ENCODE measurements at regions of chr9 and their contacts with region 1.

Region 1: GRCh38 chr9:120792898-120793765 is at the start of gene FBXW2:
- DNase-seq: peak; percentile 58 to 92 (median 78)
- ATAC-seq: peak; percentile 79
- H3K4me3 ChIP-seq: peak within 1 kb of the TSS; percentile 97
- H3K4me3 Mint-ChIP-seq: peak within 1 kb of the TSS; percentile 88
- H3K27ac ChIP-seq: peak within 1 kb of the TSS; percentile 81 to 82
- H3K27ac Mint-ChIP-seq: peak within 1 kb of the TSS; percentile 92
- H3K4me1 ChIP-seq: peaks cover 39% of the 10 kb centered on the region
- H3K4me1 Mint-ChIP-seq: peaks cover 63% of the 10 kb centered on the region
- H3K27me3 ChIP-seq: no peaks in the 10 kb centered on the region
- H3K27me3 Mint-ChIP-seq: no peaks in the 10 kb centered on the region
- CTCF ChIP-seq: no peak
- total RNA-seq, gene FBXW2: 58.7 to 64.7 TPM

Region 2: GRCh38 chr9:120774722-120775121 is 18.4 kb before region 1 on chr9:
- CTCF ChIA-PET with region 1: no interaction called
- POLR2A ChIA-PET with region 1: no interaction called
- intact Hi-C with region 1: no loop called
- DNase-seq: no peak
- ATAC-seq: no peak
- H3K4me3 ChIP-seq: no peak overlapping the region
- H3K4me3 Mint-ChIP-seq: no peak overlapping the region
- H3K27ac ChIP-seq: no peak overlapping the region
- H3K27ac Mint-ChIP-seq: no peak overlapping the region
- H3K4me1 ChIP-seq: no peaks in the 10 kb centered on the region
- H3K4me1 Mint-ChIP-seq: peaks cover 15% of the 10 kb centered on the region
- H3K27me3 ChIP-seq: no peaks in the 10 kb centered on the region
- H3K27me3 Mint-ChIP-seq: no peaks in the 10 kb centered on the region
- CTCF ChIP-seq: no peak

Region 3: GRCh38 chr9:120936011-120936763 is 143.1 kb after region 1 on chr9:
- CTCF ChIA-PET with region 1: no interaction called
- POLR2A ChIA-PET with region 1: interaction called, 16 read pairs
- intact Hi-C with region 1: no loop called
- DNase-seq: peak; percentile 79 to 95 (median 88)
- ATAC-seq: peak; percentile 64
- H3K4me3 ChIP-seq: no peak overlapping the region
- H3K4me3 Mint-ChIP-seq: peak overlapping the region; percentile 46
- H3K27ac ChIP-seq: peak overlapping the region; percentile 45 to 100
- H3K27ac Mint-ChIP-seq: peak overlapping the region; percentile 100
- H3K4me1 ChIP-seq: peaks cover 56% of the 10 kb centered on the region
- H3K4me1 Mint-ChIP-seq: peaks cover 57% of the 10 kb centered on the region
- H3K27me3 ChIP-seq: no peaks in the 10 kb centered on the region
- H3K27me3 Mint-ChIP-seq: no peaks in the 10 kb centered on the region
- CTCF ChIP-seq: peak; percentile 94

Region 4: GRCh38 chr9:121434969-121435368 is 641.8 kb after region 1 on chr9:
- CTCF ChIA-PET with region 1: no interaction called
- POLR2A ChIA-PET with region 1: no interaction called
- intact Hi-C with region 1: no loop called
- DNase-seq: no peak
- ATAC-seq: no peak
- H3K4me3 ChIP-seq: no peak overlapping the region
- H3K4me3 Mint-ChIP-seq: no peak overlapping the region
- H3K27ac ChIP-seq: no peak overlapping the region
- H3K27ac Mint-ChIP-seq: no peak overlapping the region
- H3K4me1 ChIP-seq: no peaks in the 10 kb centered on the region
- H3K4me1 Mint-ChIP-seq: no peaks in the 10 kb centered on the region
- H3K27me3 ChIP-seq: peaks cover 2 to 17% of the 10 kb centered on the region in 2 experiments
- H3K27me3 Mint-ChIP-seq: peaks cover 33% of the 10 kb centered on the region
- CTCF ChIP-seq: no peak

Measured in CD4-positive, alpha-beta T cell (primary cell).